Dendritic cell treated with granulocyte-macrophage colony-stimulating factor and Interleukin-4, amounts not matched to agents 40 ng/mL and 50 ng/mL, for 4 days (primary cell): ENCODE measurements at regions of chr17 and their contacts with region 1.

Region 1: DNA sequence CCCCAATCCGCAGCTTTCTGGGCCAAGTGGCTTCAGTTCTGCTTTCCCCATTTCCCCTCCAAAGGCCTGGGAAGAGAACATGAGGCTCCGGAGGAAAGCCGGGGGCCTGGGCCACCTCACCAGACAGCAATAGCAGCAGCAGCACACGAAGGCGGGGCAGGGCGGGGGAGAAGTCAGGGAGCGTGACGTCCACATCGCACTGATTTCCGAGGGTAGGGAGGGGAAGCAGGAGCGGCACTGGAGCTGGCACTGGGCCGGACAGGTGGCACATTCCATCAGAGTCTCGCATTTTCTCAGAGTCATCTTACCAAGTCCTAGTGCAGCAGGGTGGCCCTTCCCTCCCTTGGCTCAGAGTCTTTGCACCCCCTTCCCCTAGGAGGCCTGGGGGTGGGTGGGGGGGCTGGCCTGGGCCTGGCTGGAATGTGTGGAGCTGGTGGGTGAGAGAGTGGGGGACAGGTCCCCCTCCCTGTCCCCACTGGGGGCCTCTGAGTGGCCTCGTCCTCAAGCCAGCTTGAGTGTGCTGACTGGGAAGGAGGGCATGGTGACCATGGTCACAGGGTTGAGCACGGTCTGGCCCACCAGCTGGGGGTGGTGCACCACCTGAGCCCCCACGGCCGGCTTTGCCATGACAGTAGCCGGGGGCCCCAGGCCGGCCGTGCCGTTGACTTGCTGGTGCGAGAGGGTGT is 14.3 kb downstream of the MNT start:
- H3K4me3 Mint-ChIP-seq: no peak overlapping the region
- H3K27ac Mint-ChIP-seq: peak overlapping the region; percentile 60
- H3K4me1 Mint-ChIP-seq: peaks cover 82% of the 10 kb centered on the region
- H3K27me3 Mint-ChIP-seq: no peaks in the 10 kb centered on the region

Region 2: DNA sequence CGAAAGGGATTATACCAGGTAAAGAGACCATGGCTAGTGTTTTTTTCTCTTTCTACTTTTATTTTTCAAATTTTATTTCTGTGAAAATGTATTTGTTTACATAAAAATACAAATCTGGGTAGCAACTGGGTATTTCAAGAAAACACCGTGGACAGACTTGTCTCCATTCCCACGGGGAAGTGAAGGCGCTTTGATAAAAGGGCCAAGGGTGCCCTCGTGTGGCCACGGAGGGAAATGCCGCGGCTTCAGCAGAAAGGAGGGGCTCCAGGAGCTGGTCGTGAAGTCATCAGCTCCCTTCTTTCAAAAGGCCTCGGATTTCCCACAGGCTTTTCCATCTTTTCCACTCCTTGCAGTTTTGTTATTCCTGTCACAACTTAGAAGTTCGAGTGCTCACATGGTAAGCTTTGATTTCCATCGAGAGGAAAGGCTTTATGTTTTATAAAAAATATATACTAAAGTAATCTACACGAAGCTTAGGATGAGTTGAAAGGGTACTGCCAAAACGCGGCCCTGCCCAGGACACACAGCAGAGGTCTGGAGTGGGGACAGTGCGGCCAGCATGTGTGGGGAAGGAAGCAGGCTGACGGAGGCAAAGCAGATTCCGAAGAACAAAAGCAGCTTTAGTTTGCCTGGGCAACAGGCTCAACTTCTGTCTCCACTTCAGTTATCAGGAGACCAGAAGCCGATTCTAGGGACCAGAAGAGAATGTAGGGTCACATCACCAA is 29.6 kb after region 1 on chr17:
- intact Hi-C with region 1: loop called (anchors 1 kb)
- H3K4me3 Mint-ChIP-seq: no peak overlapping the region
- H3K27ac Mint-ChIP-seq: no peak overlapping the region
- H3K4me1 Mint-ChIP-seq: peaks cover 54% of the 10 kb centered on the region
- H3K27me3 Mint-ChIP-seq: no peaks in the 10 kb centered on the region

Region 3: GRCh38 chr17:2427215-2427614 is 40.7 kb after region 1 on chr17:
- intact Hi-C with region 1: no loop called
- H3K4me3 Mint-ChIP-seq: no peak overlapping the region
- H3K27ac Mint-ChIP-seq: no peak overlapping the region
- H3K4me1 Mint-ChIP-seq: peaks cover 8% of the 10 kb centered on the region
- H3K27me3 Mint-ChIP-seq: no peaks in the 10 kb centered on the region